GM10248 (cell line): ENCODE measurements at regions of chr4 and their contacts with region 1.

Region 1: GRCh38 chr4:83284193-83285054 is at the start of gene COQ2:
- DNase-seq: peak; percentile 92
- CTCF ChIP-seq: no peak

Region 2: GRCh38 chr4:82721819-82722423 is 562.5 kb before region 1 on chr4:
- CTCF ChIA-PET with region 1: interaction called, 10 read pairs
- POLR2A ChIA-PET with region 1: no interaction called
- DNase-seq: peak; percentile 30
- CTCF ChIP-seq: peak; percentile 81

Region 3: DNA sequence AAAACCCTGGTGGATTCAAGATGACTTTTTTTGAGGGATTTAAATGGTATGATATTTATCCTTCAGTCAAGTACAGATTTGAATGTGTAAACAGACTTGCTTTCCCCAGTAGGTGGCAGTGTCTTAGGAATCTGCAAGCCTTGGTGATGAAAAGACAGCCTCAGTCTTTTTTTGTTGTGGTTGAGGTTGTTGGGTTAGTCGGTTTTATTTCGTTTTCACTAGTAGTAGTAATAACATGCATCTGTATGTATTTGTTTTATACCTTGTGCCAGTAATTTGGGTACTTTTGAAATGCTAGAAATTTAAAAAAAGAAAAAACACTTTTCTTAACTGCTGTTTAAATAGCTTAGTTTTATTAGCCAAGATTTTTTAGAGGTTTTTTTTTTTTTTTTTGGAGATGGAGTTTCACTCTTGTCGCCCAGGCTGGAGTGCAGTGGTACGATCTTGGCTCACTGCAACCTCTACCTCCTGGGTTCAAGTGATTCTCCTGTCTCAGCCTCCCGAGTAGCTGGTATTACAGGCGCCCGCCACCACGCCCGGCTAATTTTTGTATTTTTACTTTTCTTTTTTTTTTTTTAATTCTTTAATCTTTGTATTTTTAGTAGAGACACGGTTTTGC is 210.2 kb before region 1 on chr4:
- CTCF ChIA-PET with region 1: interaction called, 29 read pairs
- POLR2A ChIA-PET with region 1: no interaction called
- DNase-seq: peak; percentile 80
- CTCF ChIP-seq: peak; percentile 61

Region 4: GRCh38 chr4:83110223-83110945 is 174.0 kb before region 1 on chr4:
- CTCF ChIA-PET with region 1: interaction called, 15 read pairs
- POLR2A ChIA-PET with region 1: no interaction called
- DNase-seq: peak; percentile 83
- CTCF ChIP-seq: peak; percentile 89

Region 5: DNA sequence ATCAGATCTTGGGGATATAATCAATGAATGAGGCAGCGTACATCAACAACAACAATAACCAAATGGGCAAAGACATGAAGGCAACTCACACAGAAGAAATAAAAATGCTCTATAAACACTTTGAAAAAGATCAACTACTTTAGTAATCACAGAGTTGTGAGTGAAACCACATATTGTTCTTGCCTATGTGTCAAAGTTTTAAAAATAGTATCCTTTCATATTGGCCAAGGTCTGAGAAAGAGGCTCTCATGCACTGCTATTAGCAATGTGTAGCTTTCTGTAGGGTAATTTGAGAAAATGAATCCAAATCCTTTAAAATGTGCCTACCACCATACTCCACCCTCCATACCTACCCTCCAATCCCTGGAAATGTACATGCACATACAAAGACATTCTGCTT is 24.8 kb before region 1 on chr4:
- CTCF ChIA-PET with region 1: interaction called, 35 read pairs
- POLR2A ChIA-PET with region 1: no interaction called
- DNase-seq: no peak
- CTCF ChIP-seq: no peak

Region 6: GRCh38 chr4:83267121-83267829 is 17.1 kb before region 1 on chr4:
- CTCF ChIA-PET with region 1: interaction called, 35 read pairs
- POLR2A ChIA-PET with region 1: no interaction called
- DNase-seq: no peak
- CTCF ChIP-seq: no peak